Activated T-helper 1 cell treated with anti-CD3 and anti-CD28 coated beads, Interleukin-12 subunit alpha, Interleukin-12 subunit beta, Interleukin-2, Interleukin-4 antibody, amounts not matched to agents 30 ng/mL and 10 ng/mL and 1 ng/mL, durations not matched to agents 14 hours and 24 hours and 36 hours (primary cell): ENCODE measurements at regions of chr13 and their contacts with region 1.

Region 1: DNA sequence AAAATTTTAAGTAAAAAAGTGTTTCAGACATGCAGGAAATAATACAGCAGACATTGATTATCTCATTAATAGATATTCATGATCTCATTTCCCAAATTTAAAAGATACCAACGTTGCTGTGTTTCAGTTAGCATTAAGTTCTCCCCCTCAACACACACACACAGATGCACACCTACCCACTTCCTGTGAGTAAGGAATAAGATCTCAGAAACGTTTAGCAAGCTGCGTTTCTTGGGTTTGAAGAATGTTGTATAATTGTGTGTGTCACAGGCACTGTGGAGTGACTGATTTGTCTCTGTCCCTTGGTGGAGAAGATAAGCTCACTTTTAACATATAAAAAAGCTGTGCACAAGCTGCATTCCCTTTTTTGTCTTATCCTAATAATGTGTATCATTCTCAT is 196.8 kb downstream of the PDS5B start:
- DNase-seq: no peak
- H3K4me3 Mint-ChIP-seq: no peak overlapping the region
- H3K27ac Mint-ChIP-seq: no peak overlapping the region
- H3K4me1 Mint-ChIP-seq: peaks cover 20% of the 10 kb centered on the region
- H3K27me3 Mint-ChIP-seq: no peaks in the 10 kb centered on the region

Region 2: DNA sequence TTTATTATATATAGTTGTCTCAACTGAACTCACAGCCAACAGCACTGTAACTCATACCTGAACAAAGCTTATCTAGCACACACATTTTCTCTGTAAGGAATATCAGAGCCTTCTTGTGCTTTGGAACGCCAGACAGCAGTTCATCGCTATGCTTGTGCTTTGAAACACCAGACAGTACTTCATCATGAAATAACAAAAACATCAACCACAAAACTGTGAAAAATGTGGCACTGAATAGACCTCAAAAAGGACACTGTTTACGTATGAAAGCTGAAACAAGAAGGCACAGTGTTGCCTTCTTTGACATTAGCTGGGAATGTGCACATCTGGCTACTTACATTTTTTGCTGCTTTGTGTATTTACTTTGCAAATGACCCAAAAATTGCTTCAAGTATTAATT is 36.6 kb before region 1 on chr13:
- intact Hi-C with region 1: loop called (anchors 1 kb)
- DNase-seq: no peak
- H3K4me3 Mint-ChIP-seq: no peak overlapping the region
- H3K27ac Mint-ChIP-seq: no peak overlapping the region
- H3K4me1 Mint-ChIP-seq: no peaks in the 10 kb centered on the region
- H3K27me3 Mint-ChIP-seq: no peaks in the 10 kb centered on the region

Region 3: GRCh38 chr13:32911506-32911905 is 128.4 kb after region 1 on chr13:
- intact Hi-C with region 1: loop called (anchors 2 kb)
- DNase-seq: peak; percentile 19
- H3K4me3 Mint-ChIP-seq: no peak overlapping the region
- H3K27ac Mint-ChIP-seq: peak overlapping the region; percentile 64
- H3K4me1 Mint-ChIP-seq: peaks cover 16% of the 10 kb centered on the region
- H3K27me3 Mint-ChIP-seq: peaks cover 4% of the 10 kb centered on the region